Heart left ventricle (tissue), 16 donors: ENCODE measurements at regions of chr22 and their contacts with region 1.

Region 1: DNA sequence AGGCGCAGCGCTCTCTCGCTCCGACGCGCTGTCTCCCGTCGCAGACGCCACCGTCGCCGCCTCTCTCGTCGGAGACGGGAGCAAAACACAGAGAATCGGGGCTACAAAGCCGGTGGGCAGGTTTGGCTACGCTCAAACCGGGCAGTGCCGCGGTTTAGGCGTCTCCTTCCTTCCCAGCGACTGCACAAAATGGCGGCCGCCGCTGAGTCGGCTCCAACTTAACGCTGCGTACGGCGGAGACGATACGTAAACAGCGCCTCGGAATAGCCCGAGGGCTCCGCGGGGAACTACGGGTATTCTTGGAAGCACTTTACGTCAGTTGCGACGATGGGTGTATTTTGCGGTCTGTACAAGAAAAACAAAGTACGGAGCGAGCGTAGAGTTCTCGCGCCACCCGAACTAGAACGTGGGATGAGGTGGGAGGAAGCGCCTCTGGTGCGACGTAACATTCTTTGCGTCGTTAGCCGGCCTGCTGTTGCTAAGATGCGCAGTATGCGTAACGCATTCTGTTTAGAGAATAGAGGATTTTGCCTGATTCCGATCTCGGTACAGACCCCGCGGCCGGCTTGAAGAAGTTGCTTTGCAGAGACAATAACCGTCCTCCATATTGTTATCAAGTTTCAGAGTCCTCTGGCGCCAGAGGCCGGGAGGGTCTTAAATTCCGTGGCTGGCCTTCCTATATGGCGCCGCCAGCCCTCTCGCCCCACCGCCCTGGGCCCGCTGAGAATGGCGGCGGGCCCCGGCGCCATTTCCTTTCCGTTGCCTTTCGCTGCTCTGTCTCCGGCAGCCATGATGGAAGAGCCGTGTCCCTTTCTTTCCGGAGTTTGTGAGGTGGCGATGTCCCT is at the start of gene DDX17:
- DNase-seq: peak; percentile 94 to 95 (median 94)
- ATAC-seq: peak; percentile 82 to 91 (median 86)
- H3K4me3 ChIP-seq: peak within 1 kb of the TSS; percentile 67 to 95 (median 91)
- H3K27ac ChIP-seq: peak within 1 kb of the TSS; percentile 98 to 100 (median 100)
- H3K4me1 ChIP-seq: peaks cover 5 to 44% (median 34%) of the 10 kb centered on the region in 12 donors
- H3K27me3 ChIP-seq: no peaks in the 10 kb centered on the region
- CTCF ChIP-seq: peak in 1 of 12 donors; percentile 28
- POLR2A ChIP-seq: peak; percentile 9 to 53
- total RNA-seq, gene DDX17: 149 to 202 (median 170) TPM

Region 2: DNA sequence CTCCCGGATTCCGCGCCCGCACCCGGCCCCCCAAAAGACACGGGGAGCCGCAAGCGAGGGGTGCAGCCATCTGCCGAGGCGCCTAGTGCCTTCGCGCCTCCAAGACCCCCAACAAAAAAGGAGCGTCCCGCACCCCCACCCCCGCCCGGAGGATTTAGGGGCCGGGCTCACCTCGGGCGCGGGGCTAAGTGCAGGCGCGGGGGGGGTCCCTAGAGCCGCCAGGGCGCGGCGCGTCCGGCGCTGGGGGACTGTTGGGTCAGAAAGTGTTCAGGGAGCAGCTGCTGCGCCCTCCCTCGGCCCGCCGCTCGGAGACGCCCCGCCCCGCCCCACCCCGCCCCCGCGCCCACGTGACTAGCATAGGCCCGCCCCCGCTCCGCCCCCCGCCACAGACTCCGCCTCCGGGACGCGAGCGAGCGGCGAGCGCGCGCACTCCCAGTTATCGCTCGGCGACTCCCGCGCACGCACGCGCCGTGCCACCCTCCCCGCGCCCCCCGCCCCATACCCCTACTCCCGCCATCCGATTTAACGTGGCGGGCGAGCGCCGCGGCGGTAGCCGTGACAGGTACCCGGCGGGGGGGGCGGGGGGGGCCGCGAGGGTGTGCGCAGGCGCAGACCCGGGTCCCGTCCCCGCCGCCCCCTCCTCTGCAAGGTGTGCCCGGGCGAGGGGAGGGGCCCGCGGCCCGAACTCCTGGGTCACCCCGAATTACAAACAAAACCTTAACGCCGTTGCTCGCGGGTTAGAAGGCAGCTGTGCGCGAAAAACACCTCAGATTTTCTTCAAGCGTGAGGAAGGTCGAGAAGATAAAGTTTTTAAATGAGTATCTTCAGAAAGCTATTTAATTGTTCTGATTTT is 107.5 kb before region 1 on chr22:
- intact Hi-C with region 1: loop called in 3 of 10 experiments (anchors 2 to 5 kb)
- DNase-seq: peak; percentile 87 to 95 (median 89)
- ATAC-seq: peak; percentile 76 to 92 (median 90)
- H3K4me3 ChIP-seq: peak overlapping the region; percentile 67 to 100 (median 92)
- H3K27ac ChIP-seq: peak overlapping the region; percentile 92 to 100 (median 98)
- H3K4me1 ChIP-seq: peaks cover 0 to 38% (median 15%) of the 10 kb centered on the region in 12 donors
- H3K27me3 ChIP-seq: no peaks in the 10 kb centered on the region
- CTCF ChIP-seq: peak in 2 of 12 donors; percentile 15 to 28
- POLR2A ChIP-seq: peak; percentile 85 to 90

Region 3: GRCh38 chr22:38412435-38413084 is 93.8 kb before region 1 on chr22:
- intact Hi-C with region 1: loop called in 2 of 10 experiments (anchors 5 to 10 kb)
- DNase-seq: peak in 1 of 5 donors; percentile 12
- ATAC-seq: peak in 3 of 4 donors; percentile 15 to 38 (median 28)
- H3K4me3 ChIP-seq: peak overlapping the region in 11 of 12 donors; percentile 14 to 48 (median 32)
- H3K27ac ChIP-seq: peak overlapping the region in 8 of 12 donors; percentile 57 to 89 (median 70)
- H3K4me1 ChIP-seq: peaks cover 0 to 32% (median 14%) of the 10 kb centered on the region in 12 donors
- H3K27me3 ChIP-seq: no peaks in the 10 kb centered on the region
- CTCF ChIP-seq: peak; percentile 61 to 89 (median 80)
- POLR2A ChIP-seq: no peak

Region 4: GRCh38 chr22:38461414-38462081 is 44.8 kb before region 1 on chr22:
- intact Hi-C with region 1: loop called in 5 of 10 experiments (anchors 5 kb)
- DNase-seq: peak; percentile 86 to 91 (median 88)
- ATAC-seq: peak; percentile 54 to 81 (median 76)
- H3K4me3 ChIP-seq: peak overlapping the region in 10 of 12 donors; percentile 9 to 43 (median 30)
- H3K27ac ChIP-seq: peak overlapping the region in 9 of 12 donors; percentile 11 to 82 (median 71)
- H3K4me1 ChIP-seq: peaks cover 0 to 50% (median 20%) of the 10 kb centered on the region in 12 donors
- H3K27me3 ChIP-seq: peaks cover 0 to 70% (median 5%) of the 10 kb centered on the region in 9 donors
- CTCF ChIP-seq: peak in 2 of 12 donors; percentile 3 to 5
- POLR2A ChIP-seq: no peak

Region 5: GRCh38 chr22:38467904-38468758 is 38.2 kb before region 1 on chr22 and contains the start of gene KDELR3:
- intact Hi-C with region 1: loop called in 5 of 10 experiments (anchors 5 kb)
- DNase-seq: peak; percentile 74 to 86 (median 79)
- ATAC-seq: peak; percentile 43 to 86 (median 82)
- H3K4me3 ChIP-seq: peak within 1 kb of the TSS; percentile 44 to 85 (median 68)
- H3K27ac ChIP-seq: peak within 1 kb of the TSS in 9 of 12 donors; percentile 34 to 83 (median 55)
- H3K4me1 ChIP-seq: peaks cover 0 to 29% (median 18%) of the 10 kb centered on the region in 12 donors
- H3K27me3 ChIP-seq: peaks cover 0 to 27% (median 0%) of the 10 kb centered on the region in 9 donors
- CTCF ChIP-seq: peak in 3 of 12 donors; percentile 16 to 28 (median 24)
- POLR2A ChIP-seq: peak in 1 of 2 donors; percentile 27
- total RNA-seq, gene KDELR3: 4.4 to 15.5 (median 8.5) TPM

Region 6: GRCh38 chr22:38681784-38682335 is 175.5 kb after region 1 on chr22 and contains the start of gene TOMM22:
- intact Hi-C with region 1: loop called in 3 of 10 experiments (anchors 5 to 10 kb)
- DNase-seq: peak; percentile 88 to 94 (median 92)
- ATAC-seq: peak; percentile 96 to 99 (median 99)
- H3K4me3 ChIP-seq: peak within 1 kb of the TSS; percentile 72 to 100 (median 92)
- H3K27ac ChIP-seq: peak within 1 kb of the TSS in 11 of 12 donors; percentile 53 to 88 (median 79)
- H3K4me1 ChIP-seq: peaks cover 0 to 17% (median 8%) of the 10 kb centered on the region in 12 donors
- H3K27me3 ChIP-seq: no peaks in the 10 kb centered on the region
- CTCF ChIP-seq: peak; percentile 24 to 91 (median 64)
- POLR2A ChIP-seq: peak in 1 of 2 donors; percentile 47
- total RNA-seq, gene TOMM22: 37.1 to 82.1 (median 71.6) TPM

Region 7: GRCh38 chr22:38696606-38697424 is 190.5 kb after region 1 on chr22:
- intact Hi-C with region 1: loop called in 1 of 10 experiments (anchors 10 kb)
- DNase-seq: no peak
- ATAC-seq: peak in 1 of 4 donors; percentile 52
- H3K4me3 ChIP-seq: peak overlapping the region in 5 of 12 donors; percentile 3 to 87 (median 8)
- H3K27ac ChIP-seq: peak overlapping the region in 11 of 12 donors; percentile 45 to 99 (median 74)
- H3K4me1 ChIP-seq: peaks cover 23 to 61% (median 49%) of the 10 kb centered on the region in 12 donors
- H3K27me3 ChIP-seq: no peaks in the 10 kb centered on the region
- CTCF ChIP-seq: no peak
- POLR2A ChIP-seq: no peak